ENCODE measurements at regions of chr10 and their contacts with region 1.

Region 1: GRCh38 chr10:84537447-84537931 is 209.1 kb downstream of the CCSER2 start:
- DNase-seq: peak in 2 of 6 donors; percentile 40 to 61
- ATAC-seq: peak; percentile 81 to 92 (median 88)
- H3K4me3 ChIP-seq: no peak overlapping the region
- H3K27ac ChIP-seq: no peak overlapping the region
- H3K4me1 ChIP-seq: peaks cover 0 to 4% (median 0%) of the 10 kb centered on the region in 3 donors
- H3K27me3 ChIP-seq: peaks cover 0 to 4% (median 0%) of the 10 kb centered on the region in 4 donors
- CTCF ChIP-seq: peak; percentile 56 to 81 (median 73)

Region 2: DNA sequence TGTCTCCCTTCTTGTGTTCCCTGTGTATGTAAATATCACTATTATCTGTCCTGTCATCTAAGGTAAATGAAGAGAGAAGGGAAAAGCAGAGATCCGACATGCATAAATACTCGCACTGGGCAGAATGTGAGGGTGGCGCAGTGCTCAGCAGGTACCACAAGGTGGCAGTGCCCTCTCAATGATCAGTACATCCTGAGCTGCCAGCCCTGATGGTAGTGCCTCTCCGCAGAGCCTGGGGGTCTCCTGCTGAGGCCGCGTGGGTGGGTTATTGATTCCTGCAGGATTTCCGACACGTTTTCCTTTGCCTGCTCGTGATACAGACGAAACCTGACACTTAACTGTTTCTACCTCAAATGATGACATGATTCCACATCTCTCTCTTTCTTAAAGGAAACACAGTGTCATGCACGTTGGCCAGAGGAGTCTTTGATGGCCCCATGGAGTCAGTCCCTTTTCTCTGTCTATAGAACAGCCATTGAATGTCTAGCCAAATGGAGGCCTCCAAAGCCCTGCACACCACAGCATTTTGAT is 272.8 kb before region 1 on chr10:
- intact Hi-C with region 1: loop called in 2 of 3 experiments (anchors 5 kb)
- DNase-seq: peak; percentile 30 to 78 (median 66)
- ATAC-seq: peak; percentile 83 to 99 (median 97)
- H3K4me3 ChIP-seq: no peak overlapping the region
- H3K27ac ChIP-seq: no peak overlapping the region
- H3K4me1 ChIP-seq: no peaks in the 10 kb centered on the region
- H3K27me3 ChIP-seq: no peaks in the 10 kb centered on the region
- CTCF ChIP-seq: peak; percentile 78 to 95 (median 86)

Region 3: DNA sequence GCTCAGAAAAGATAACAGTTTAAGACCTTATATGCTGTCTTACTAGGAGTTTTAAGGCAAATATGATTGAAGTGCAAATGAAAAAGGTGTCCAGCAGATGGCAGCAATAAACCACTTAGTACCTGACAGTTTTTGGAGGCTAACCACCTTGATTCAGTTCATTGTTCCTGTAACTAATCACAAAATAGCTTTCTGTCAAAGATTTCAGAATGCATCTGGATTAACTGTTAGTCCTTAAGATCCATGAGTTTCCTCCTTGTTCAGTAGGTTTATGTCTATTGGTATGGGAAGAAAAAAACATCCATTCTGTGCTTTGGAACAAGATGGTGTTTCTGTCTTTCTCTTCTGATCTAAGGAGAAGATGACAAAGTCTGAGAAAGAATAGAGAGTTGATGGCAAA is 162.5 kb before region 1 on chr10:
- intact Hi-C with region 1: loop called (anchors 5 to 10 kb)
- DNase-seq: peak in 3 of 6 donors; percentile 4 to 54 (median 20)
- ATAC-seq: peak in 3 of 4 donors; percentile 71 to 86 (median 82)
- H3K4me3 ChIP-seq: no peak overlapping the region
- H3K27ac ChIP-seq: no peak overlapping the region
- H3K4me1 ChIP-seq: peaks cover 0 to 4% (median 0%) of the 10 kb centered on the region in 3 donors
- H3K27me3 ChIP-seq: no peaks in the 10 kb centered on the region
- CTCF ChIP-seq: peak; percentile 45 to 73 (median 48)

Region 4: DNA sequence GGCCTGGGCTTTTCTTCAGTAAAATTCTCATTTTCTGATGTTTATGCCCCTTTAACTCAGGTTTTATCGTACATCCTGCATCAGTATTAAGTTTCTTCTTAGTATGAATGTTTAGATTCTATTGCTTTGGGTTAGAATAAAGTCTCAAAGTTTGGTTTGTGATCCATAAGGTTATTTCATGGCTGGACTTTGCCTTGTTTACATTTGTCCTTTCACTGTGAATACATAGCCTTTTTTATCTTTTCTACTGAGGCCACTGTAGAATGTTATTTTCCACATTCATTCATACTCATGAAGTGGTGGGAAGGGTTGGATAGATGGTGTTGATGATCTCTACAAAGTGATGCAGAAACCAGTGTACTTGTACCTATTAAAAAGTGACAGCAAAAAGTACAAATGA is 149.3 kb before region 1 on chr10:
- intact Hi-C with region 1: loop called in 1 of 3 experiments (anchors 10 kb)
- DNase-seq: no peak
- ATAC-seq: no peak
- H3K4me3 ChIP-seq: no peak overlapping the region
- H3K27ac ChIP-seq: no peak overlapping the region
- H3K4me1 ChIP-seq: no peaks in the 10 kb centered on the region
- H3K27me3 ChIP-seq: no peaks in the 10 kb centered on the region
- CTCF ChIP-seq: no peak

Region 5: DNA sequence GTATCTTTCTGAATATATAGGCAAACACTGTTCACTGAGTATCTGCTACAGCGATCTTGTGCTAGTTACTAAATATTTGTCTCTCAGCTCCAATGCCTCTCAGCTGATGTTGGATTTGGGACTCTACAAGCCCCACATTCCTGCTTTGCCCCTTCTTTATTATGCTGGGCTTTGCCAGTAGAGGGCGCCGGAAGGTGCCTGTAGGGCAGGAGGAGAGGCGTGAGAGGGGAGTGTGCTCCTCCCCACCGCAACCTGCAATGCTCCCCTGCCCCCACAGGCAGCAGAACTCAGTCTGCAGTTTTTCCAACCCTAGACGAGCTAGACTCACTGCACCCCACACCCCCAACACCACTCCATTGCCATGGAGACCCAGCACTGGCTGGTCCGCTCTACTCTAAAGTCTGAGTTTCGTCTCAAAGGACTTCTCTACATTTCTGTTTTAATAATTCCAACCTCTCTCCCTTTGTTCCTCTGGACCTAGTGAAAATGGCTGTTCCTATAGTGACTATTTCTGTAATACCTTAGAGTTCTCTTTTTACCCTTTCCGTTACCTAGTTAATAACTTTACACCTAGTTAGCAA is 128.5 kb after region 1 on chr10:
- intact Hi-C with region 1: no loop called
- DNase-seq: peak in 1 of 6 donors; percentile 27
- ATAC-seq: peak in 1 of 4 donors; percentile 30
- H3K4me3 ChIP-seq: no peak overlapping the region
- H3K27ac ChIP-seq: no peak overlapping the region
- H3K4me1 ChIP-seq: no peaks in the 10 kb centered on the region
- H3K27me3 ChIP-seq: no peaks in the 10 kb centered on the region
- CTCF ChIP-seq: peak in 3 of 4 donors; percentile 14 to 15 (median 14)

Region 6: GRCh38 chr10:86376852-86377796 is 1839.6 kb after region 1 on chr10:
- intact Hi-C with region 1: loop called in 1 of 3 experiments (anchors 10 kb)
- DNase-seq: peak; percentile 48 to 99 (median 88)
- ATAC-seq: peak; percentile 99 to 100 (median 99)
- H3K4me3 ChIP-seq: peak overlapping the region in 1 of 4 donors; percentile 34
- H3K27ac ChIP-seq: no peak overlapping the region
- H3K4me1 ChIP-seq: no peaks in the 10 kb centered on the region
- H3K27me3 ChIP-seq: peaks cover 0 to 6% (median 0%) of the 10 kb centered on the region in 4 donors
- CTCF ChIP-seq: peak; percentile 99 to 100 (median 100)

Measured in pancreas (tissue), 10 donors.